ENCODE measurements at regions of chr15 and their contacts with region 1.

Region 1: GRCh38 chr15:85543741-85544155 is 163.3 kb downstream of the AKAP13 start:
- DNase-seq: peak; percentile 23 to 69 (median 54)
- ATAC-seq: peak; percentile 90 to 94
- H3K4me3 Mint-ChIP-seq: peak overlapping the region; percentile 58 to 78 (median 71)
- H3K27ac Mint-ChIP-seq: peak overlapping the region; percentile 36 to 94 (median 84)
- H3K4me1 Mint-ChIP-seq: peaks cover 47 to 88% (median 75%) of the 10 kb centered on the region in 4 donors
- H3K27me3 Mint-ChIP-seq: no peaks in the 10 kb centered on the region

Region 2: GRCh38 chr15:85515212-85515611 is 28.5 kb before region 1 on chr15:
- POLR2A ChIA-PET with region 1: no interaction called
- DNase-seq: no peak
- ATAC-seq: no peak
- H3K4me3 Mint-ChIP-seq: peak overlapping the region in 1 of 10 donors; percentile 34
- H3K27ac Mint-ChIP-seq: peak overlapping the region in 2 of 10 donors; percentile 16 to 33
- H3K4me1 Mint-ChIP-seq: peaks cover 35 to 77% (median 69%) of the 10 kb centered on the region in 4 donors
- H3K27me3 Mint-ChIP-seq: no peaks in the 10 kb centered on the region

Region 3: DNA sequence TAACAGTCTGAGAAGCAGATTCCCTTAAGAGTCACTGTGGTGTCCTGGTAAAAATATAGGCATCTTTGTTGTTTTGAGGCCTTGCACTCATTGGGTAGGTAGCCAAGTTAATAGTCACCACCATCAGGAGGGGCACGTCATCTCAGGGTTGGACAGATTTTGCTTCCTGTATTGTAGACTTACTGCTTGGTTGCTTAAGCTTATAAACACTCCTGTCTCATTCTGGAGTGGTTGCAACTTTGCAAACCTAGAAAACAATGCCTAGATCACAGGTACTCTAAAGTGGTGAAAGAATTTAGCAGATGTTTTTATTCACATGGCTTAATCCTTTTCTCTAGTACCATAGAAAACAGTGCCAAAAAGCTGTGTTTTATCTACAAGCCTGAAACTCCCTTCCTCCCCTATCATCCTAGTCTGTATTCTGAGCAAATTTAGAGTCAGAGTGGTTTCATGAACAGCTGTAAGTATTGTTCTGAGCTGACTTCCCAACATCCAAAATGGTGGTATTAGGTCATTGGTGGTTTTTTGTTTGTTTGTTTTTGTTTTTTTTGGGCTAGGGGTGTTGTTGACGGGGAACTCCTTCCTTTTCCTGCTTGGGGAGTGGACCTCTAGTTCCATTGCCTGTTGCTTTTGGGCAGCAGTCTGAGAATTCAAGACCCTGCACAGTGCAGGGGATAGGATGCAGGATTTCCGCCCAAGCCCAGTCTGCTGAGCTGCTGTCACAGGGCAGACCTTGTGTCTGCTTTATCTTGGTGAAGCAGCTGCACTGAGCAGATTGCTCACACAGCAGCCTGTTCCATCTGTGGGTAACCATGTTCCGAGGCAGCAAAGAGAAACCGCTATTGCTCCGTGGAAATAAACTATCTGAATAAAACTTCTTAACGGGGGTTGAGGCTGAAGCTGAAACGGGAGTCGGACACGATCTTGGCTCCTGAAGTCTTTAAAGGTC is 38.7 kb after region 1 on chr15:
- POLR2A ChIA-PET with region 1: interaction called, 11 read pairs
- DNase-seq: peak; percentile 27 to 80 (median 62)
- ATAC-seq: peak; percentile 85 to 90
- H3K4me3 Mint-ChIP-seq: peak overlapping the region; percentile 80 to 93 (median 84)
- H3K27ac Mint-ChIP-seq: peak overlapping the region; percentile 90 to 98 (median 96)
- H3K4me1 Mint-ChIP-seq: peaks cover 50 to 80% (median 68%) of the 10 kb centered on the region in 4 donors
- H3K27me3 Mint-ChIP-seq: no peaks in the 10 kb centered on the region